Esophagus squamous epithelium (tissue), 5 donors: ENCODE measurements at regions of chr5 and their contacts with region 1.

Region 1: DNA sequence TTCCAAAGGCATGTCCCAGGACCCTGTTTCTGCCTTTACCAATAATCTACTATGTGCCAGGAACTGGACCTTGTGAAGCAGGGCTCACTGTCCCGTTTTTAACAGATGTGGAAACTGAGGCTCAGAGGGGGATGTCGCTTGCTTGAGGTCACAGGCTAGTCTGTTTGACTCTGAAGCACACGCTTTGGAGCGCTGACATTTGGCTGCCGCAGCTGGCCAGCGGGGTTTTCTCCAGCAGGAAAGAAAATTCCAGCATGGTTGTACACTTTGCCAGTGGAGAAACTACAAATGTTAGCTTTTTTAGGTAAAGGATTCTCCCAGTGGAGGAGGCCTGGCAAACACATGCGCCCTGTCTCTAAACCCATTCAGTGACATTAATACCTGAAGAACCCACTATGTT is 50.5 kb downstream of the SH3PXD2B start:
- DNase-seq: no peak
- H3K4me3 ChIP-seq: no peak overlapping the region
- H3K27ac ChIP-seq: peak overlapping the region; percentile 63 to 84 (median 82)
- H3K4me1 ChIP-seq: peaks cover 14 to 58% (median 19%) of the 10 kb centered on the region in 3 donors
- H3K27me3 ChIP-seq: no peaks in the 10 kb centered on the region
- CTCF ChIP-seq: no peak
- POLR2A ChIP-seq: no peak

Region 2: GRCh38 chr5:172353241-172353812 is 50.5 kb before region 1 on chr5:
- intact Hi-C with region 1: no loop called
- DNase-seq: no peak
- H3K4me3 ChIP-seq: no peak overlapping the region
- H3K27ac ChIP-seq: no peak overlapping the region
- H3K4me1 ChIP-seq: no peaks in the 10 kb centered on the region
- H3K27me3 ChIP-seq: no peaks in the 10 kb centered on the region
- CTCF ChIP-seq: no peak
- POLR2A ChIP-seq: no peak

Region 3: GRCh38 chr5:172447646-172448365 is 44.0 kb after region 1 on chr5:
- intact Hi-C with region 1: loop called (anchors 2 kb)
- DNase-seq: no peak
- H3K4me3 ChIP-seq: no peak overlapping the region
- H3K27ac ChIP-seq: peak overlapping the region in 1 of 4 donors; percentile 70
- H3K4me1 ChIP-seq: peaks cover 43 to 100% (median 64%) of the 10 kb centered on the region in 3 donors
- H3K27me3 ChIP-seq: no peaks in the 10 kb centered on the region
- CTCF ChIP-seq: no peak
- POLR2A ChIP-seq: no peak